Left cardiac atrium (tissue), 4 donors: ENCODE measurements at regions of chr2 and their contacts with region 1.

Region 1: GRCh38 chr2:11446733-11447248 is 19.2 kb downstream of the E2F6 start:
- DNase-seq: peak; percentile 46
- ATAC-seq: peak; percentile 72 to 75

Region 2: GRCh38 chr2:11129598-11130449 is 317.0 kb before region 1 on chr2:
- intact Hi-C with region 1: loop called in 1 of 2 experiments (anchors 2 kb)
- DNase-seq: peak; percentile 61
- ATAC-seq: peak; percentile 62 to 64

Region 3: GRCh38 chr2:11234309-11234708 is 212.5 kb before region 1 on chr2:
- intact Hi-C with region 1: loop called in 1 of 2 experiments (anchors 10 kb)
- DNase-seq: no peak
- ATAC-seq: no peak

Region 4: DNA sequence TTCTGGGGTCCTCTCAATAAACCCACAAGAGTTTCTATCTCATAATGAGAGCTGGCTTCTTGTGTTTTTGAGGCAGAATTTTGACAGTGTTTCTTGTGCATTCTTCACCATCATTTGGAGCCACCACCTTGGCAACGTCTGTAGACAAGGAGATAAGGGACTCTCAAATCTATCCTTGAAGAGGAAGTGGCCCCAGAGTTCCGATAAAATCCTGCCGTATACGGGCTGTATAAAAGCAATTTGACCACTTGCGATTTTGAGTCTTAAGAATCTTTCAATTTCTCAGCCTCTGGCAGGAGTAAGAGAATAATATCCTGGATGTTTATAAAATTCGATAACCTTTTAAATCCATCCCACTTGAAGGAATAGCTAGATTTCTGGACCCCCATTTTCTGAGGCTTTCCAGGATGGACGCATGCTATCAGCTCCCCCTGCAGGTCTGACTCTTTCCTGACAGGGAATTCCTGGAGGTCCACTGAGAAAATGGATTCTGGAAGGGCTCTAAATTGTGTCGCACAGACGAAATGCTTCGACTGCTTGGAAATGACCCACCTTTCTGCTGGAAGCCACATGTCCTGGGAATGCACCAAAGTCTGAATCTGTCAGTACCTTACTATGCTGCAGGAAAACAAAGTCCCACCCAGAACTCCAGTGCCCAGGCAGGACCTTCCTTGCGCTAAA is 34.9 kb before region 1 on chr2:
- intact Hi-C with region 1: loop called in 1 of 2 experiments (anchors 2 kb)
- DNase-seq: peak; percentile 54
- ATAC-seq: peak; percentile 66 to 72

Region 5: DNA sequence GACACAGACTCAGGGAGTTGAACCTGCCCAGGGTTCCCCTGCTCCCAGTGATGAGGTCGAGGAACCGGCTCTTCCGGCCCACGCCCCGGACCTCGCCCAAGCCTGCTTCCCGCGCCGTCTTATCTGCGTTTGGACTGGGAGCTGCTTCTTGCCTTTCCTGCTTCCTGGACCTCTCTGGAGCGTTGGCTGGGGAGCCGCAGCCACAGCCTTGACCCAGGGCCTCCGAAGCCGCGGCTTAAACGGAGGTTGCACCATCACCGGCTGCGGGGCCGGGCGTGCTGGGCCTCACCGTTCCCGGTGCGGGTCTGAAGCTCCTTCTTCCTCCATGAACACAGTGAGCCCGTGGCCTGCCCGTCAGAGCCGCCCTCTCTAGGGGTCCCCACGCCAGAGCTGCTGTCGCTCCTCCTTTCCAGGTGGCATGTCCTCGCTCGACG is 209.9 kb after region 1 on chr2:
- intact Hi-C with region 1: no loop called
- DNase-seq: peak; percentile 47
- ATAC-seq: peak in 1 of 2 donors; percentile 15